T-cell (primary cell): ENCODE measurements at regions of chr10 and their contacts with region 1.

Region 1: DNA sequence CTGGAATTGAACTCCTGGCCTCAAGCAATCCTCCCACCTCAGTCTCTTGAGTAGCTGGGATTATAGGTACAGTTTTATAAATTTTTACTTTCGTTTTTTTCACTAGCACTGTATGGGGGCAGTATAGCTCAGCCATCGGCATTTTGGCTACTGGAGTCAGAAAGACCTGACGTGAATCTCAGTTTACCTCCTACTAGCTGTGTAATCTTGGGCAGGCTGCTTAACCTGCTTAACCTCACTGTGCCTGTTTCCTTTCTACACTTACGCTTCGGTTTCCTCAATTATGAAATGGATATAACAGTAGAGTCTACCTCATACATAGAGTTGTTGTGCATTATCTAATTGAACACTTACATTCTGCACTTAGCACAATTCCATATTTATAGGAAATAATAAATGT is 16.7 kb downstream of the STN1 start:
- DNase-seq: peak in 1 of 35 experiments; percentile 32
- ATAC-seq: peak; percentile 52 to 70 (median 68)
- H3K4me3 ChIP-seq: peak overlapping the region in 1 of 2 donors; percentile 15
- H3K4me3 Mint-ChIP-seq: peak overlapping the region; percentile 22 to 41 (median 25)
- H3K27ac ChIP-seq: peak overlapping the region; percentile 40
- H3K27ac Mint-ChIP-seq: peak overlapping the region; percentile 55 to 74
- H3K4me1 ChIP-seq: peaks cover 0 to 14% of the 10 kb centered on the region in 2 experiments
- H3K4me1 Mint-ChIP-seq: peaks cover 43 to 59% (median 55%) of the 10 kb centered on the region in 3 donors
- H3K27me3 ChIP-seq: no peaks in the 10 kb centered on the region
- H3K27me3 Mint-ChIP-seq: no peaks in the 10 kb centered on the region

Region 2: GRCh38 chr10:103870516-103870915 is 30.8 kb before region 1 on chr10:
- CTCF ChIA-PET with region 1: no interaction called
- POLR2A ChIA-PET with region 1: no interaction called
- DNase-seq: no peak
- ATAC-seq: no peak
- H3K4me3 ChIP-seq: no peak overlapping the region
- H3K4me3 Mint-ChIP-seq: no peak overlapping the region
- H3K27ac ChIP-seq: no peak overlapping the region
- H3K27ac Mint-ChIP-seq: no peak overlapping the region
- H3K4me1 ChIP-seq: no peaks in the 10 kb centered on the region
- H3K4me1 Mint-ChIP-seq: no peaks in the 10 kb centered on the region
- H3K27me3 ChIP-seq: no peaks in the 10 kb centered on the region
- H3K27me3 Mint-ChIP-seq: no peaks in the 10 kb centered on the region

Region 3: DNA sequence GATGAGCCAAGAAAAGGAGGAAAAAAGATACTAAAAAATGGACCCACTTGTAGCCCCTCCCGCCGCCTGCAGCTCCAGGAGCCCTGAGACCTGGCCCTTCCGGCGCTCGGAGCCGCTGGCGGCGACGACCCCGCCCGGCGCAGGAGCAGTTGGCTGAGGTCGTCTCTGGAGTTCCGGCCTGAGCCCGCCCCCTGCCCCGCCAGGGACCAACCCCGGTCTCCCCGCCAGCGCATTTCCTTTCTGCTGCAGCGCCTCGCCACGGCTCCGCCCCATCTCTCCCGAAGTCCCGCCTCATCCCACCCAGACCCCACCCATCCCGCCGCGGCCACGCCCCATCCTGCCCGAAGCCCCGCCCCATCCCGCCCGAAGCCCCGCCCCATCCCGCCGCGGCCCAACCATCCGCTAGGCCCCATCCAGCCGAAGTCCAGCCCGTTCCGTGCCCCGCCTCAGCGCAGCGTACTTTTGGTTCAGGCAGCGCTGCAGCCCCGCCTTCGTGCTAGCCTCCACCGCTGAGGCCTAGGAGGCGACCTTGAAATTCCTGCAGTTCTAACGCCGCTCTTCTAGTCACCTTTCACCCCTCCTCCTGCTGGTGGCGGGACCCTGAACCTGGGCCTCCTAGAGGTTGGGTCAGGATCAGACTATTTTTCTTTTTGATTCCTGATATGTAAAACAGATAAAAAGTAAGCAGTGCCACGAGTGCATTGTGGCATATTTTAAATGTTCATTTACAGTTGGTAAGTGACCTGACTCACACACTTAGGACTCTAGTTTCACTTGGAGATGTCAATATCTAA is 17.0 kb after region 1 on chr10 and contains the start of gene STN1:
- CTCF ChIA-PET with region 1: interaction called in 1 of 2 experiments, 10 read pairs
- POLR2A ChIA-PET with region 1: interaction called in 1 of 2 experiments, 8 read pairs
- DNase-seq: peak; percentile 88 to 96 (median 93)
- ATAC-seq: peak; percentile 94 to 95 (median 94)
- H3K4me3 ChIP-seq: peak within 1 kb of the TSS; percentile 90 to 91
- H3K4me3 Mint-ChIP-seq: peak within 1 kb of the TSS; percentile 93 to 98 (median 94)
- H3K27ac ChIP-seq: peak within 1 kb of the TSS; percentile 85
- H3K27ac Mint-ChIP-seq: peak within 1 kb of the TSS; percentile 96 to 99
- H3K4me1 ChIP-seq: peaks cover 23 to 43% of the 10 kb centered on the region in 2 experiments
- H3K4me1 Mint-ChIP-seq: peaks cover 38 to 42% (median 39%) of the 10 kb centered on the region in 3 donors
- H3K27me3 ChIP-seq: no peaks in the 10 kb centered on the region
- H3K27me3 Mint-ChIP-seq: no peaks in the 10 kb centered on the region
- total RNA-seq, gene STN1: 37.6 to 47.5 (median 41.8) TPM